MCF 10A (cell line): ENCODE measurements at regions of chr6 and their contacts with region 1.

Region 1: DNA sequence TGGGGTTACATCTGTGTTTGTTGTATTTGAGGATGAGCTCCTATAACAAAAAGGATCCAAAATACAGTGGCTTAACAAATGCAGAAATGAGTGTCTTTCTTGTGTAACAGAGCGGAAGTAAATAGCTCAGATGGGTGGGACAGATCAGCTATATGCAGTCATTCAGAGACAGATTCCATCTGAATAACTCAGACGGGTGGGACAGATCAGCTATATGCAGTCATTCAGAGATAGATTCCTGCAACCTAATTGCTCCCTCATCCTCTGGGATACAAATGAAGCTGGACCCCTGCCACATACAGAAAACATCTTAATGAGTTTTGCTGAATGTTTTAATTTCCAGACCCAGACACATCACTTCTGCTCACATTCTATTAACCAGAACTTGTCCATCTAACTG is 332.3 kb downstream of the BCKDHB start:
- DNase-seq: peak; percentile 68
- H3K4me3 Mint-ChIP-seq: no peak overlapping the region
- H3K27ac Mint-ChIP-seq: peak overlapping the region; percentile 91
- H3K4me1 Mint-ChIP-seq: peaks cover 20% of the 10 kb centered on the region
- H3K27me3 Mint-ChIP-seq: no peaks in the 10 kb centered on the region
- CTCF ChIP-seq: no peak

Region 2: GRCh38 chr6:80457439-80457933 is 18.7 kb after region 1 on chr6:
- CTCF ChIA-PET with region 1: interaction called, 8 read pairs
- POLR2A ChIA-PET with region 1: interaction called, 10 read pairs
- intact Hi-C with region 1: loop called (anchors 2 kb)
- DNase-seq: peak; percentile 98
- H3K4me3 Mint-ChIP-seq: no peak overlapping the region
- H3K27ac Mint-ChIP-seq: peak overlapping the region; percentile 30
- H3K4me1 Mint-ChIP-seq: peaks cover 58% of the 10 kb centered on the region
- H3K27me3 Mint-ChIP-seq: no peaks in the 10 kb centered on the region
- CTCF ChIP-seq: no peak

Region 3: GRCh38 chr6:80547827-80548226 is 109.1 kb after region 1 on chr6:
- CTCF ChIA-PET with region 1: no interaction called
- POLR2A ChIA-PET with region 1: interaction called, 4 read pairs
- intact Hi-C with region 1: loop called (anchors 5 kb)
- DNase-seq: peak; percentile 36
- H3K4me3 Mint-ChIP-seq: peak overlapping the region; percentile 51
- H3K27ac Mint-ChIP-seq: peak overlapping the region; percentile 68
- H3K4me1 Mint-ChIP-seq: peaks cover 58% of the 10 kb centered on the region
- H3K27me3 Mint-ChIP-seq: no peaks in the 10 kb centered on the region
- CTCF ChIP-seq: no peak

Region 4: GRCh38 chr6:80638213-80639055 is 199.7 kb after region 1 on chr6:
- CTCF ChIA-PET with region 1: no interaction called
- POLR2A ChIA-PET with region 1: no interaction called
- intact Hi-C with region 1: no loop called
- DNase-seq: peak; percentile 82
- H3K4me3 Mint-ChIP-seq: no peak overlapping the region
- H3K27ac Mint-ChIP-seq: peak overlapping the region; percentile 64
- H3K4me1 Mint-ChIP-seq: peaks cover 7% of the 10 kb centered on the region
- H3K27me3 Mint-ChIP-seq: no peaks in the 10 kb centered on the region
- CTCF ChIP-seq: no peak